HEK293 (cell line): ENCODE measurements at regions of chr16 and their contacts with region 1.

Region 1: GRCh38 chr16:50671644-50672260 is 9.4 kb downstream of the SNX20 start:
- H3K4me3 ChIP-seq: no peak overlapping the region
- H3K27ac ChIP-seq: no peak overlapping the region
- H3K4me1 ChIP-seq: no peaks in the 10 kb centered on the region
- CTCF ChIP-seq: no peak

Region 2: GRCh38 chr16:50573947-50574744 is 97.6 kb before region 1 on chr16:
- CTCF ChIA-PET with region 1: no interaction called
- POLR2A ChIA-PET with region 1: no interaction called
- H3K4me3 ChIP-seq: no peak overlapping the region
- H3K27ac ChIP-seq: no peak overlapping the region
- H3K4me1 ChIP-seq: no peaks in the 10 kb centered on the region
- CTCF ChIP-seq: no peak

Region 3: GRCh38 chr16:50688083-50688482 is 16.3 kb after region 1 on chr16:
- CTCF ChIA-PET with region 1: interaction called, 39 read pairs
- POLR2A ChIA-PET with region 1: no interaction called
- H3K4me3 ChIP-seq: no peak overlapping the region
- H3K27ac ChIP-seq: no peak overlapping the region
- H3K4me1 ChIP-seq: no peaks in the 10 kb centered on the region
- CTCF ChIP-seq: no peak

Region 4: GRCh38 chr16:50744881-50745280 is 73.1 kb after region 1 on chr16:
- CTCF ChIA-PET with region 1: interaction called, 11 read pairs
- POLR2A ChIA-PET with region 1: no interaction called
- H3K4me3 ChIP-seq: no peak overlapping the region
- H3K27ac ChIP-seq: no peak overlapping the region
- H3K4me1 ChIP-seq: peaks cover 8% of the 10 kb centered on the region
- CTCF ChIP-seq: no peak